ENCODE measurements at regions of chr19 and their contacts with region 1.

Region 1: DNA sequence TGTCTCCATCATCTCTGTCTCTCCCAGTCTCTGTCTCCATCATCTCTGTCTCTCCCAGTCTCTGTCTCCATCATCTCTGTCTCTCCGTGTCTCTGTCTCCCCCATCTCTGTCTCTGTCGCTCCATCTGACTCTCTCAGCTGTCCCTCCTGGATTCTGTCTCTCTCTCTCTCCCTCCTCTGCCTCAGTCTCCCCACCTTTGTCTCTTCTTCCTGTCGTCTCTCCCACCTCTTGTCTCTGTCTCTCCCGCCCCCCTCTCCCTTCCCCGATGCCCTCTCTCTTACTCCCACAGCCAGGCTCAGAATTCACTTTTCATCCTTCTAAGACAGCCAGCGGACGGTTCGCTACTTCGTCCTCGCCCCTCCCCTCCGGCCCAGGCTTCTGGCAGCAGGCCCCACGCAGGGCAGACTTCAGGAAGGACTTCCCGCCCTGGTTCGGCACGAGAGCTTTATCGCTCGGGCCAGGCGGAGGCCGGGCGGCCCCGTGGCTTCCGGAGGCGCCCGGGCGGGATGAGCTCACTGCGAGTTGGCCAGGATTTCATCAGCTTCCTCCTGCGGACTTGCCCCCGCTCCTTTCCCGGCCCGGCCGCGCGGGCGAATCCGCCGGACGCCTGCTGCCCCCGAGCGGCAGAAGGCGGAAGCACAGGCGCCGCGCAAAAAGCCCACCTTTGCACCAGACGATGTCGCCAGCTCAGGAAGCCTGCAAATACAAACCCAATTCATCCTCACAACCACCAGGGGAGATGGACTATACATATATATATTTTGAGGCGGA is 12.4 kb upstream of the CCDC9 start:
- DNase-seq: peak; percentile 90
- ATAC-seq: peak; percentile 79
- H3K4me3 ChIP-seq: peak overlapping the region; percentile 61
- H3K27ac ChIP-seq: peak overlapping the region; percentile 32; the same call in 1 of the 2 replicates
- H3K4me1 ChIP-seq: peaks cover 8% of the 10 kb centered on the region; the same call in 1 of the 2 replicates
- H3K27me3 ChIP-seq: no peaks in the 10 kb centered on the region
- CTCF ChIP-seq: peak; percentile 77

Region 2: GRCh38 chr19:47145639-47146486 is 98.1 kb before region 1 on chr19:
- CTCF ChIA-PET with region 1: no interaction called
- POLR2A ChIA-PET with region 1: no interaction called
- intact Hi-C with region 1: loop called (anchors 5 kb)
- DNase-seq: no peak
- ATAC-seq: no peak
- H3K4me3 ChIP-seq: no peak overlapping the region
- H3K27ac ChIP-seq: no peak overlapping the region
- H3K4me1 ChIP-seq: peaks cover 5% of the 10 kb centered on the region
- H3K27me3 ChIP-seq: no peaks in the 10 kb centered on the region
- CTCF ChIP-seq: no peak

Region 3: DNA sequence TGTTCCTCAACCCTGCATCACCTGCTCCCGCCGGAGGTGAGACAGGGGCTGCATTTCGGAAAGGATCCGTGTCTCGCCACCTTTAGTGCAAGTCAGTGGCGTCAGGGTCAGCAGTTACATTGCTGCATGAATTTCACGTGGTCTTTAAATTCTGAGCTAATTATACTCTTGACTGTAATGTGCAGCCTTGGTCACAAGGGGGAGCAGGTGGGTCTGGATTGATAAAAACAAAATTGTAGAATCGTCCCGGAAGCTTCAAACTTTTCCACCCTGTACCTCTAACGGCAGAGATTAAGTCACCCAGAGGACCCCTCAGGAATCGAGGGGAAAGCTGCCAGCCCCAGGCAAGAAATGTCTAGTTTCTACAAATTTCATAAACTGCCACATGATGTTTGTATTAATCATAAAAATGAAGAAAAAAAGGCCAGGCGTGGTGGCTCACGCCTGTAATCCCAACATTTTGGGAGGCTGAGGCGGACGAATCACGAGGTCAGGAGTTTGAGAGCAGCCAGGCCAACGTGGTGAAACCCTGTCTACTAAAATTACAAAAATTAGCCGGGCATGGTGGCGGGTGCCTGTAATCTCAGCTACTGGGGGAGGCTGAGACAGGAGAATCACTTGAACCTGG is 33.2 kb before region 1 on chr19:
- CTCF ChIA-PET with region 1: interaction called, 80 read pairs
- POLR2A ChIA-PET with region 1: interaction called, 8 read pairs
- intact Hi-C with region 1: loop called (anchors 1 kb)
- DNase-seq: peak; percentile 81
- ATAC-seq: peak; percentile 35
- H3K4me3 ChIP-seq: no peak overlapping the region
- H3K27ac ChIP-seq: no peak overlapping the region
- H3K4me1 ChIP-seq: no peaks in the 10 kb centered on the region
- H3K27me3 ChIP-seq: no peaks in the 10 kb centered on the region
- CTCF ChIP-seq: peak; percentile 74

Region 4: DNA sequence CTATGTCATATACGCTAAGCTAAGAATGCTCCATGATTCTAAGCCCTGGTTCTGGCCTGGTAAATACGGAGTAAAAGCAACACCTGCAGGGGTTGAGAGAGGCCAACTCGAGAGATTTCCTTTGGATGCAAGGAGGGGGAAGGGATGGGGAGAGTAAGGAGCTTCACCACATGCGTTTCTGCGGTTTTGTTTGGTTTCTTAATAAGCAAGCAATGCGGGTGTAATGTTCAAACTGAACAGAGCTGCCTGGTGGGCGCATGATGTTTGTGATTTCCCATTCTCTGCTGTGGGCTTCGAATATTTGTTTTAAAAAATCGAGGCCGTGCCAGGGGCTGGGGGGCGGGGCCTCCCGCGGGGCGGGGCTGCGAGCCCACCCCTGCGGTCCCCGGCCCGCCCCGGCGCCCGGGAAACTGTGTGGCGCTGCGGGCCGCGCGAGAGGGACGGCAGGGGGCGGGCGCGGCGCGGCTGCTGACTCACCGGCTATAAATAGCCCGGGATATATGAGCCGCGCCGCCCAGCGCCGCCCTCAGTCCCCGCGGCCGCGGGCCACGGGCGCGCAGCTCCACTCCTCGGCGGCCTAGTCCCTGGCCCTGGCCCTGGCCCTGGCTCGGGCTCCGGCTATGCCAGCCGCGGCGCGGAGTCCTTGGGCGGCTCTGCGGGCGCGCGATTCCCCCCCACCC is 18.1 kb before region 1 on chr19:
- CTCF ChIA-PET with region 1: interaction called, 6 read pairs
- POLR2A ChIA-PET with region 1: interaction called, 23 read pairs
- intact Hi-C with region 1: no loop called
- DNase-seq: peak; percentile 81
- ATAC-seq: peak; percentile 63
- H3K4me3 ChIP-seq: peak overlapping the region; percentile 64
- H3K27ac ChIP-seq: peak overlapping the region; percentile 40
- H3K4me1 ChIP-seq: peaks cover 25% of the 10 kb centered on the region
- H3K27me3 ChIP-seq: no peaks in the 10 kb centered on the region
- CTCF ChIP-seq: no peak